CD4-positive, alpha-beta T cell (primary cell): ENCODE measurements at regions of chr12 and their contacts with region 1.

Region 1: GRCh38 chr12:14948672-14949071 is 10.3 kb upstream of the ERP27 start:
- DNase-seq: peak in 9 of 14 experiments; percentile 29 to 92 (median 57)
- ATAC-seq: peak; percentile 85
- H3K4me3 ChIP-seq: peak overlapping the region; percentile 34
- H3K4me3 Mint-ChIP-seq: peak overlapping the region; percentile 81
- H3K27ac ChIP-seq: peak overlapping the region; percentile 90 to 95
- H3K27ac Mint-ChIP-seq: peak overlapping the region; percentile 94
- H3K4me1 ChIP-seq: peaks cover 66% of the 10 kb centered on the region
- H3K4me1 Mint-ChIP-seq: peaks cover 92% of the 10 kb centered on the region
- H3K27me3 ChIP-seq: no peaks in the 10 kb centered on the region
- H3K27me3 Mint-ChIP-seq: no peaks in the 10 kb centered on the region
- CTCF ChIP-seq: no peak

Region 2: GRCh38 chr12:14901228-14901562 is 47.5 kb before region 1 on chr12:
- CTCF ChIA-PET with region 1: no interaction called
- POLR2A ChIA-PET with region 1: no interaction called
- intact Hi-C with region 1: no loop called
- DNase-seq: no peak
- ATAC-seq: no peak
- H3K4me3 ChIP-seq: no peak overlapping the region
- H3K4me3 Mint-ChIP-seq: no peak overlapping the region
- H3K27ac ChIP-seq: no peak overlapping the region
- H3K27ac Mint-ChIP-seq: no peak overlapping the region
- H3K4me1 ChIP-seq: no peaks in the 10 kb centered on the region
- H3K4me1 Mint-ChIP-seq: peaks cover 18% of the 10 kb centered on the region
- H3K27me3 ChIP-seq: no peaks in the 10 kb centered on the region
- H3K27me3 Mint-ChIP-seq: no peaks in the 10 kb centered on the region
- CTCF ChIP-seq: no peak

Region 3: DNA sequence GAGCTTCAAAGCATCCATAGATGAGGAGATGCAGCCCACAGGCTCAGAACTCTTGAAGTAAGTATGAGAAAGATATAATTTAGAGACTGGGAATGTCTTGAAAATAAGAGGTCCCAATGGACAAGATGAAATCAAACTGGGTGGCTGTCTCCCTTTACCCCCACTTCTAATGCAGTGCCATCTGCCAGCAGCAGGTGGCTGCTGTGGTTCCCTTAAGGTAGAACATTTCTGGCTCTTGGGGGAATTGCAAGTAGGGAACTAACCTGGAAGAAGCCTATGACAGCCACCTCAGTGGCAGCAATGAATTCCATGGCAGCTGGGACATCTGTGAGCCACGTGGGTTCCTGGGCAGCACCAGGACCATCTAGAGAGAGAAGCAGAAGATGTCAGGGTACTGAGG is 11.0 kb before region 1 on chr12:
- CTCF ChIA-PET with region 1: interaction called, 4 read pairs
- POLR2A ChIA-PET with region 1: interaction called, 12 read pairs
- intact Hi-C with region 1: no loop called
- DNase-seq: peak in 5 of 14 experiments; percentile 33 to 68 (median 55)
- ATAC-seq: peak; percentile 35
- H3K4me3 ChIP-seq: no peak overlapping the region
- H3K4me3 Mint-ChIP-seq: no peak overlapping the region
- H3K27ac ChIP-seq: no peak overlapping the region
- H3K27ac Mint-ChIP-seq: peak overlapping the region; percentile 72
- H3K4me1 ChIP-seq: peaks cover 17% of the 10 kb centered on the region
- H3K4me1 Mint-ChIP-seq: peaks cover 63% of the 10 kb centered on the region
- H3K27me3 ChIP-seq: no peaks in the 10 kb centered on the region
- H3K27me3 Mint-ChIP-seq: no peaks in the 10 kb centered on the region
- CTCF ChIP-seq: peak; percentile 59